ENCODE measurements at regions of chrX and their contacts with region 1.

Region 1: GRCh38 chrX:53071604-53072417 is 10.4 kb upstream of the TSPYL2 start:
- DNase-seq: peak in 5 of 10 donors; percentile 52 to 68 (median 58)
- H3K4me3 ChIP-seq: peak overlapping the region; percentile 15 to 65 (median 46)
- H3K27ac ChIP-seq: peak overlapping the region in 57 of 59 donors; percentile 20 to 86 (median 76)
- H3K27me3 ChIP-seq: peaks cover 0 to 59% (median 9%) of the 10 kb centered on the region in 45 donors
- CTCF ChIP-seq: peak; percentile 32 to 81 (median 68)

Region 2: DNA sequence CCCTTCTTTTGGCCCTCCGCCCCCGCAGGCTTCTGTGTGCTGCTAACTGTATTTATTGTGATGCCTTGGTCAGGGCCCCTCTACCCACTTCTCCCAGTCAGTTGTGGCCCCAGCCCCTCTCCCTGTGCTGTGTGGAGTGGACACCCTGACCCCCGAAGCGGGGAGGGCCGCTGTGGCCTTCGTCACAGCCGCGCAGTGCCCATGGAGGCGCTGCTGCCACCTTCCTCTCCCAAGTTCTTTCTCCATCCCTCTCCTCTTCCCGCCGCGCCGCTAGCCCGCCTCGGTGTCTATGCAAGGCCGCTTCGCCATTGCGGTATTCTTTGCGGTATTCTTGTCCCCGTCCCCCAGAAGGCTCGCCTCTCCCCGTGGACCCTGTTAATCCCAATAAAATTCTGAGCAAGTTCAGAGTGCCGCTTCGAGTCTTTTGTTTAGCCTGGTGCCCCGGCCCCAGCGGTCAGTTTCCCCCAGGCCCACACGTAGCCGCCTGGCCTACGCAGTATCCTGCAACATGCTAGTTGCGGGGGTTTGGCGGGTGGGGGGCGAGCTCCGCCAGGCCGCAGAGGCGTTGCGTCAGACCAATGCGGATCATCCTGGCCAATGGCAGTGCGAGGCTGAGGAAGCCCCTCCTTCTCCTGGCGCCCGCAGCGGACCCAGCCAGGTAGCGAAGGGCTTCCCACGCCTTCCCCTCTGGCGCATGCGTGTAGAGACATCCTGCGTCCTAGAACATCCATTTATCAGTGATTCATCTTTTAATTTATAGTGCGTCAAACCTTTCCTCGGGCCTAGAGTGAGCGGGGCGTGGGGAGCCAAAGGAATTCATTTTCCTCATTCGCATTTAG is 16.5 kb after region 1 on chrX:
- intact Hi-C with region 1: loop called in 1 of 2 experiments (anchors 2 kb)
- DNase-seq: peak; percentile 51 to 88 (median 82)
- H3K4me3 ChIP-seq: peak overlapping the region in 58 of 59 donors; percentile 8 to 88 (median 42)
- H3K27ac ChIP-seq: peak overlapping the region in 58 of 59 donors; percentile 49 to 98 (median 87)
- H3K27me3 ChIP-seq: peaks cover 0 to 70% (median 17%) of the 10 kb centered on the region in 45 donors
- CTCF ChIP-seq: no peak

Measured in dorsolateral prefrontal cortex (tissue), 120 donors.